Activated CD8-positive, alpha-beta T cell treated with anti-CD3 and anti-CD28 coated beads, Interleukin-2, amount 10 ng/mL, durations not matched to agents 7 days and 5 days (primary cell): ENCODE measurements at regions of chr11 and their contacts with region 1.

Region 1: GRCh38 chr11:63567044-63567840 is 4.1 kb upstream of the PLAAT2 start:
- DNase-seq: peak; percentile 66
- ATAC-seq: peak; percentile 81
- H3K4me3 Mint-ChIP-seq: peak overlapping the region; percentile 12
- H3K27ac Mint-ChIP-seq: peak overlapping the region; percentile 74
- H3K4me1 Mint-ChIP-seq: peaks cover 48% of the 10 kb centered on the region
- H3K27me3 Mint-ChIP-seq: peaks cover 2% of the 10 kb centered on the region

Region 2: GRCh38 chr11:63553741-63554151 is 13.5 kb before region 1 on chr11:
- CTCF ChIA-PET with region 1: interaction called, 39 read pairs
- POLR2A ChIA-PET with region 1: interaction called, 9 read pairs
- DNase-seq: peak; percentile 73
- ATAC-seq: peak; percentile 74
- H3K4me3 Mint-ChIP-seq: peak overlapping the region; percentile 75
- H3K27ac Mint-ChIP-seq: peak overlapping the region; percentile 100
- H3K4me1 Mint-ChIP-seq: peaks cover 59% of the 10 kb centered on the region
- H3K27me3 Mint-ChIP-seq: no peaks in the 10 kb centered on the region

Region 3: DNA sequence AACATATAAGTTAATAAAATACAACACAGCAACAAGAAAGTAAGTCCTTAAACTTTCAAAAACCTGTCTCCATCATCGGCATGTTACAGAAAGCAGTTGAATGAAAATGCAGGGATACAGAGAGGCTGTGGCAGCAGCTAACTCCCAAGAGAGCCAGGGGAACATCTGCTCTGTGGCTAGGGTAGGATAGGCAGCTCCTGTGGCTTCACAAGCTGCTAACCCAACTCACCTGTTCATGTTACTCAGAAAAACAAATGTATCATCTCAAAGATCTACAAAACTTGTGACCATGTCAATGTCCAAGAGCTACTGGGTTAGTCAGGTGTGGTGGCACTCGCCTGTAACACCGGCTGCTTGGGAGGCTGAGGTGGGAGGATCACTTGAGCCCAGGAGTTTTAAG is 62.2 kb after region 1 on chr11:
- CTCF ChIA-PET with region 1: no interaction called
- POLR2A ChIA-PET with region 1: no interaction called
- DNase-seq: no peak
- ATAC-seq: no peak
- H3K4me3 Mint-ChIP-seq: no peak overlapping the region
- H3K27ac Mint-ChIP-seq: no peak overlapping the region
- H3K4me1 Mint-ChIP-seq: peaks cover 4% of the 10 kb centered on the region
- H3K27me3 Mint-ChIP-seq: no peaks in the 10 kb centered on the region